ENCODE measurements at regions of chr19 and their contacts with region 1.

Region 1: GRCh38 chr19:8609279-8610040 is 1.1 kb downstream of the ADAMTS10 start:
- DNase-seq: peak; percentile 72
- ATAC-seq: peak; percentile 75
- H3K4me3 Mint-ChIP-seq: peak overlapping the region; percentile 89
- H3K27ac Mint-ChIP-seq: peak overlapping the region; percentile 89
- H3K4me1 Mint-ChIP-seq: peaks cover 46% of the 10 kb centered on the region
- H3K27me3 Mint-ChIP-seq: no peaks in the 10 kb centered on the region
- CTCF ChIP-seq: no peak

Region 2: GRCh38 chr19:8592231-8593009 is 17.0 kb before region 1 on chr19:
- CTCF ChIA-PET with region 1: interaction called, 17 read pairs
- POLR2A ChIA-PET with region 1: interaction called, 8 read pairs
- DNase-seq: peak; percentile 100
- ATAC-seq: peak; percentile 98
- H3K4me3 Mint-ChIP-seq: peak overlapping the region; percentile 74
- H3K27ac Mint-ChIP-seq: no peak overlapping the region
- H3K4me1 Mint-ChIP-seq: peaks cover 9% of the 10 kb centered on the region
- H3K27me3 Mint-ChIP-seq: peaks cover 52% of the 10 kb centered on the region
- CTCF ChIP-seq: no peak

Measured in WTC11 (cell line).